ENCODE measurements at regions of chr1 and their contacts with region 1.

Region 1: GRCh38 chr1:65036545-65037180 is 70.3 kb upstream of the JAK1 start:
- DNase-seq: no peak
- H3K4me3 ChIP-seq: no peak overlapping the region
- H3K27ac ChIP-seq: no peak overlapping the region
- H3K4me1 ChIP-seq: peaks cover 0 to 15% (median 9%) of the 10 kb centered on the region in 4 experiments
- H3K27me3 ChIP-seq: no peaks in the 10 kb centered on the region

Region 2: DNA sequence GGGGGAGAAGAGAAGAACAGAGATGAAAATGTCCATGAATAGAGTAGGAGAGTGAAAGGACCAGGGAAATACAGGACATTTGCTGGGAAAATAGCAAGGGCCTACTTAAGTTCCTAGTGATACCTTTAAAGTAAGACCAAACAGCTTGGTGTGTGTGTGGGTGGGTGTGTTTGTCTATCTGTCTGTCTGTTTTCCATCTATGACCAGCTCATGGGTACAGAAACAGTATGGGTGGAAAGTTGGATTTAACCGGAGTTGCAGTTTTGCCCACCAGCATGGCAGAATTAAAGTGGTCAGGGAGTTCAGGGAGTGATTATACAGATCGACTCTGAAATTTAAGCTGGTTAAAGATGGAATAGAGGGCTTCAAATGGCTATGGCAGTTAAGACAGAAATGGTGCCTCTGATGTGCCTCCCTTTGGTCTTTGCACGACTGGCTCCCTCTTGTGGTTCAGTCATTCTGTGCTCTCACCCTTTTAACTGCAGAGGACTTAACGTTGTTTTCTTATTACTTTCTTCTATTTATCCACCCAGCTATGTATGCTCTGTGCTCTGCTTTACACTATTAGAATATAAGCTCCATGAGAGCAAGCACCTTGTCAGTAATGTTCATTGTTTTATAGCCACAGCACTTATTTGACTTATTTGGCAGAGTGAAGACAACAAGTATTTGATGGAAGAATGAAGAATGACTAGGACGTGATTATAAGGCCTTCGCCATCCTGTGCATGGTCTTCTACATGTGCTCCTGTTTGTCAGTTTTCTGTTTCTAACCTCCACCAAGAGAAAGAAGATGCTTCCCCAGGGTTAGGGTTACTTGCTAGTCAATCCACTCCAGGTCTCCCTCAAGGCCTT is 38.7 kb after region 1 on chr1:
- CTCF ChIA-PET with region 1: interaction called, 10 read pairs
- POLR2A ChIA-PET with region 1: no interaction called
- DNase-seq: peak; percentile 79 to 85 (median 84)
- H3K4me3 ChIP-seq: no peak overlapping the region
- H3K27ac ChIP-seq: no peak overlapping the region
- H3K4me1 ChIP-seq: peaks cover 0 to 6% (median under 1%) of the 10 kb centered on the region in 4 experiments
- H3K27me3 ChIP-seq: no peaks in the 10 kb centered on the region